WTC11 (cell line): ENCODE measurements at regions of chr10 and their contacts with region 1.

Region 1: GRCh38 chr10:112471878-112472487 is 25.0 kb downstream of the VTI1A start:
- DNase-seq: no peak
- ATAC-seq: peak; percentile 83
- H3K4me3 Mint-ChIP-seq: no peak overlapping the region
- H3K27ac Mint-ChIP-seq: peak overlapping the region; percentile 14; the same call in 1 of the 2 replicates
- H3K4me1 Mint-ChIP-seq: peaks cover 17% of the 10 kb centered on the region
- H3K27me3 Mint-ChIP-seq: no peaks in the 10 kb centered on the region
- CTCF ChIP-seq: peak; percentile 28

Region 2: GRCh38 chr10:112490545-112490944 is 18.6 kb after region 1 on chr10:
- CTCF ChIA-PET with region 1: interaction called, 13 read pairs
- POLR2A ChIA-PET with region 1: no interaction called
- DNase-seq: no peak
- ATAC-seq: no peak
- H3K4me3 Mint-ChIP-seq: no peak overlapping the region
- H3K27ac Mint-ChIP-seq: no peak overlapping the region
- H3K4me1 Mint-ChIP-seq: peaks cover 5% of the 10 kb centered on the region
- H3K27me3 Mint-ChIP-seq: no peaks in the 10 kb centered on the region
- CTCF ChIP-seq: no peak

Region 3: GRCh38 chr10:112515852-112516251 is 43.9 kb after region 1 on chr10:
- CTCF ChIA-PET with region 1: no interaction called
- POLR2A ChIA-PET with region 1: no interaction called
- DNase-seq: no peak
- ATAC-seq: no peak
- H3K4me3 Mint-ChIP-seq: no peak overlapping the region
- H3K27ac Mint-ChIP-seq: no peak overlapping the region
- H3K4me1 Mint-ChIP-seq: no peaks in the 10 kb centered on the region
- H3K27me3 Mint-ChIP-seq: no peaks in the 10 kb centered on the region
- CTCF ChIP-seq: no peak